Tibial artery (tissue), 4 donors: ENCODE measurements at regions of chr20 and their contacts with region 1.

Region 1: GRCh38 chr20:38073307-38074071 is 39.9 kb downstream of the RPRD1B start:
- DNase-seq: peak; percentile 75 to 78
- H3K4me3 ChIP-seq: no peak overlapping the region
- H3K27ac ChIP-seq: peak overlapping the region; percentile 73 to 82
- H3K4me1 ChIP-seq: peaks cover 0 to 44% (median 28%) of the 10 kb centered on the region in 4 donors
- H3K27me3 ChIP-seq: no peaks in the 10 kb centered on the region
- CTCF ChIP-seq: peak; percentile 76 to 89

Region 2: GRCh38 chr20:38165089-38165989 is 91.8 kb after region 1 on chr20 and contains the start of gene TGM2:
- intact Hi-C with region 1: loop called (anchors 5 kb)
- DNase-seq: peak; percentile 71 to 94
- H3K4me3 ChIP-seq: peak within 1 kb of the TSS; percentile 66 to 69
- H3K27ac ChIP-seq: peak within 1 kb of the TSS; percentile 84 to 89
- H3K4me1 ChIP-seq: peaks cover 4 to 91% (median 62%) of the 10 kb centered on the region in 4 donors
- H3K27me3 ChIP-seq: no peaks in the 10 kb centered on the region
- CTCF ChIP-seq: peak; percentile 94 to 98

Region 3: GRCh38 chr20:38290832-38291581 is 217.5 kb after region 1 on chr20:
- intact Hi-C with region 1: no loop called
- DNase-seq: peak in 1 of 2 donors; percentile 72
- H3K4me3 ChIP-seq: no peak overlapping the region
- H3K27ac ChIP-seq: peak overlapping the region in 1 of 2 donors; percentile 1
- H3K4me1 ChIP-seq: peaks cover 0 to 11% (median 6%) of the 10 kb centered on the region in 4 donors
- H3K27me3 ChIP-seq: no peaks in the 10 kb centered on the region
- CTCF ChIP-seq: peak in 1 of 2 experiments; percentile 35